Caco-2 (cell line): ENCODE measurements at regions of chr14 and their contacts with region 1.

Region 1: DNA sequence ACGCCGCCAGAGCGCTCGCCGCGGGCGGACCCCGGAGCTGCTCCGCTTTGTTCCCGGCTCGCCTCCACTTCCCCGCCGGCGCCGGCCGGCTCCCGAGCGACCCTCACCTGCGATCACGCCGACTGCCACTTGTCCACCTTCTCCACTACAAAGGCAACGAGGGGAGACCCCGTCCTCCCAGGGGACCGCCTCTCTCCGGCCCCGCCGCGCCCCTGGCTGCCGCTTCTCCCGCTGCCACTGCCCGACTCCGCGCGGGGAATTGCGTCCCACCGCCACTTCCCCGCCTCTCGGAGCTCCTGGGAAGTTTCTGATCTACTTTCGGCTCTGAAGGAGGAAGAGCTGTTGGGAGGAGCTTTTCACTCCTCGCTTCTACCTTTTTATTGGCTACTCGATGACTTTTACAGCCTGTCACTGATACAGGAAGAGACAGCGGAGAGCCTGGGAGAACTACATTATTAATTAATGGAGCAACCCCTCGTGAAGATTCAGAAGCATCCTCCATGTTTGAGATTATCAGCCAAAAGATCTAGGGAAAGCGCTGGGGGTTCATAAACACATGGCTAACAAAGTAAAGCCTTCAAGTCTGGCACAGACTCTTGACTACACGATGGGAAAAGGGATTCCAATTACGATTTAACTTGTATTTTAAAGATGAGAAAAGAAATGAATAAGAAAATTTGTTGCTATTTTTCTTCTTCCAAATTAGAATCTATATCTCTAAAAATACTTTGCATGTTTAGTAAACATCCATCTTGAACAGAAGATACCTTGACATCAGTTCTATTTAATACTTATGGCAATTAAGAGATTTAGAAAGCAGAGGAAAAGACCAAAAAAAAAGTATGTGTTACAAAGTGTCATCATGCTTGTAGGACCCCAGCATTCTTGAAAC is at the start of gene BAZ1A:
- DNase-seq: peak; percentile 82 to 83
- H3K4me3 ChIP-seq: peak within 1 kb of the TSS; percentile 72
- H3K4me3 Mint-ChIP-seq: peak within 1 kb of the TSS; percentile 99
- H3K27ac Mint-ChIP-seq: peak within 1 kb of the TSS; percentile 98
- H3K4me1 ChIP-seq: no peaks in the 10 kb centered on the region
- H3K4me1 Mint-ChIP-seq: no peaks in the 10 kb centered on the region
- H3K27me3 ChIP-seq: no peaks in the 10 kb centered on the region
- H3K27me3 Mint-ChIP-seq: no peaks in the 10 kb centered on the region
- CTCF ChIP-seq: no peak
- total RNA-seq, gene BAZ1A: 26.1 and 29.6 TPM in 2 replicates

Region 2: GRCh38 chr14:34678306-34678705 is 197.0 kb before region 1 on chr14:
- CTCF ChIA-PET with region 1: no interaction called
- POLR2A ChIA-PET with region 1: interaction called, 3 read pairs
- intact Hi-C with region 1: loop called (anchors 10 kb)
- DNase-seq: no peak
- H3K4me3 ChIP-seq: no peak overlapping the region
- H3K4me3 Mint-ChIP-seq: no peak overlapping the region
- H3K27ac Mint-ChIP-seq: no peak overlapping the region
- H3K4me1 ChIP-seq: no peaks in the 10 kb centered on the region
- H3K4me1 Mint-ChIP-seq: no peaks in the 10 kb centered on the region
- H3K27me3 ChIP-seq: no peaks in the 10 kb centered on the region
- H3K27me3 Mint-ChIP-seq: no peaks in the 10 kb centered on the region
- CTCF ChIP-seq: no peak

Region 3: GRCh38 chr14:34895277-34895676 is 20.0 kb after region 1 on chr14:
- CTCF ChIA-PET with region 1: no interaction called
- POLR2A ChIA-PET with region 1: no interaction called
- intact Hi-C with region 1: no loop called
- DNase-seq: no peak
- H3K4me3 ChIP-seq: no peak overlapping the region
- H3K4me3 Mint-ChIP-seq: no peak overlapping the region
- H3K27ac Mint-ChIP-seq: no peak overlapping the region
- H3K4me1 ChIP-seq: no peaks in the 10 kb centered on the region
- H3K4me1 Mint-ChIP-seq: no peaks in the 10 kb centered on the region
- H3K27me3 ChIP-seq: no peaks in the 10 kb centered on the region
- H3K27me3 Mint-ChIP-seq: no peaks in the 10 kb centered on the region
- CTCF ChIP-seq: no peak

Region 4: GRCh38 chr14:34956931-34957330 is 81.7 kb after region 1 on chr14:
- CTCF ChIA-PET with region 1: interaction called, 5 read pairs
- POLR2A ChIA-PET with region 1: interaction called, 5 read pairs
- intact Hi-C with region 1: loop called (anchors 5 kb)
- DNase-seq: no peak
- H3K4me3 ChIP-seq: no peak overlapping the region
- H3K4me3 Mint-ChIP-seq: no peak overlapping the region
- H3K27ac Mint-ChIP-seq: no peak overlapping the region
- H3K4me1 ChIP-seq: peaks cover 19% of the 10 kb centered on the region
- H3K4me1 Mint-ChIP-seq: peaks cover 16% of the 10 kb centered on the region
- H3K27me3 ChIP-seq: no peaks in the 10 kb centered on the region
- H3K27me3 Mint-ChIP-seq: no peaks in the 10 kb centered on the region
- CTCF ChIP-seq: no peak

Region 5: DNA sequence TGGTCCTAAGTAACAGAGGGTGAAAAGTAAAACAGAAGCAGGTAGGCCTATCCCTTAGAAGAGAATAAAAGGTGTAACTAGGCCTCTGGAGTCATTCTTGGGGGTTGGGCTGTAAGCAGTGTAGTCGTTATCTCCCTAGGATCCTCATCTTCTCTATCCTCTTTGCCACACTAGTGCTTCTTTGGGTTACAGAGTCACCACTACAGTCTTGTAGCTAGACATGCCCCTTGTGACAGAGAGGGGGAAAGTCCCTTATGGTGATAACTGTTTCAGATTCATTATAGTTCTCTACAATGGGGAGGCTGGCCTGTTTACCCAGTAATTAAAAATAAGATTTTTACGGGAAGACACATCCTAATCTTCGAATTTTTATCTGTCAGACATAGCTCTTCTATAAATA is 91.1 kb after region 1 on chr14:
- CTCF ChIA-PET with region 1: no interaction called
- POLR2A ChIA-PET with region 1: interaction called, 10 read pairs
- intact Hi-C with region 1: no loop called
- DNase-seq: no peak
- H3K4me3 ChIP-seq: no peak overlapping the region
- H3K4me3 Mint-ChIP-seq: no peak overlapping the region
- H3K27ac Mint-ChIP-seq: no peak overlapping the region
- H3K4me1 ChIP-seq: no peaks in the 10 kb centered on the region
- H3K4me1 Mint-ChIP-seq: no peaks in the 10 kb centered on the region
- H3K27me3 ChIP-seq: no peaks in the 10 kb centered on the region
- H3K27me3 Mint-ChIP-seq: no peaks in the 10 kb centered on the region
- CTCF ChIP-seq: no peak

Region 6: DNA sequence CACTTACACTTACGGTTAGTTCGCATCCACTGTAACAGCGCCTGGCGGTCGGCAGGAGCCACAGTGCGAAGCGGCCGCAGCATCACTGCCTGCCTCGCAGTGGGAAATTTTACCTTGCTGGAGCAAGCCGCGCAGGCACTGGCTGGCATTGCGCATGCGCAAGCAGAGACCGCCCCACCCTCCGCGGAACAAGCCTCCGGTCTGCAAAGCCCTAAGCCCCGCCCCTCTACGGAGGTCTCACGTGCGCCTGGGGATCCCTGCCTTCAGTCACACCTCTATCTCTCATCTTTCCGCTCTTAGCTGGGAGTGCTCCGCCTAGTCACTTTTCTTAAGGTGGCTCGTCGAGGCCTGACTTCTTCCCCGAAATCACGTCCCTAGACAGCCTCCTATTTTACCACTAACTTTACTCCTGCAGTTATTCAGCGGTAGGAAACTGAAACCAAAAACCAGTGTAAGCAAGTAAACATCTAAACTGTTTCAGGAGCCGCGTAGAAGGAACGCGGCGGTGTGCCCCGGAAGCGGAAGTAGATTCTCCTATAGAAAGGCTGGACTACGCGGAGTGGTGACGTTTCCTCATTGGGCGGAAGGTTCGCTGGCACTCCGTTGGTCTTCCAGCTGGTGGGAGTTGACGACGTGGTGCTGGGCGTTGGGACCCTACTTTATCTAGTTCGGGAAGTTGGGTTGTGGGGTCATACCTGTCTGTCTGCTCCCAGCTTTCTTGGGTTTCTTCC is 107.3 kb after region 1 on chr14 and contains the start of gene SRP54:
- CTCF ChIA-PET with region 1: interaction called, 4 read pairs
- POLR2A ChIA-PET with region 1: interaction called, 8 read pairs
- intact Hi-C with region 1: loop called (anchors 1 kb)
- DNase-seq: peak; percentile 99 to 100
- H3K4me3 ChIP-seq: peak within 1 kb of the TSS; percentile 58
- H3K4me3 Mint-ChIP-seq: no peak within 1 kb of the TSS
- H3K27ac Mint-ChIP-seq: no peak within 1 kb of the TSS
- H3K4me1 ChIP-seq: no peaks in the 10 kb centered on the region; the same call in 1 of the 2 replicates
- H3K4me1 Mint-ChIP-seq: no peaks in the 10 kb centered on the region
- H3K27me3 ChIP-seq: no peaks in the 10 kb centered on the region
- H3K27me3 Mint-ChIP-seq: no peaks in the 10 kb centered on the region
- CTCF ChIP-seq: no peak
- total RNA-seq, gene SRP54: 80.0 and 84.5 TPM in 2 replicates

Region 7: DNA sequence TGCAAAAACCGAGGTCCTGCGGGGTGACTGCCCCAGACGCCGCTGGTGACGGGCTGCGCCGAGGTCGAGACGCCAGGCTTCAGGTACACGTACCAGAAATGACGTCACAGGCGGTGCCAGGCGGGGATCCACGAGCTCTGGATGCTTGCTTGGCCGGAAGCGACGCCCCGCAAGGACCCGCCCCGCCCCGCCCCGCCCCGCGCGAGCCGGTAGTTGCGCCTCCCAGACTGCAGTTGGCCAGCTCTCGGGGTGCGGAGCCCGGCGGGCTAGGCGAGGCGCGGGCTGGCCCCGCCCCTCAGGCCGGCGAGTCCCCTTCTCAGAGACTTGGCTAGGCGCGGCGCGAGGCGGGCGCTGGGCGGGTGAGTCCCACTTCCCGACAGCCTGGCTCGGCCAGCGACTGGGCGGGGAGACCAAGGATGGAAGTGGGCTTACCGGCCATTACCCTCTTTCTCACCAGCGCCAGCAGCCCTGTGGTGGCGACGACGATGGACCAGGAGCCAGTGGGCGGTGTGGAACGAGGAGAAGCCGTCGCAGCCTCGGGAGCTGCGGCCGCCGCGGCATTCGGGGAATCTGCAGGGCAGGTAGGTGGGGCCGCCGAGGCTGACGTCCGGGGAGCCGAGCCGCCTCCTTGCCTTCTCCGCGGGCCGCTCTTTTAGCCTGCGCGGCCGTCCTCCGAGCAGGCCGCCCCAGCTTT is 170.9 kb after region 1 on chr14 and contains the start of gene FAM177A1:
- CTCF ChIA-PET with region 1: interaction called, 6 read pairs
- POLR2A ChIA-PET with region 1: interaction called, 3 read pairs
- intact Hi-C with region 1: loop called (anchors 10 kb)
- DNase-seq: peak; percentile 97 to 99
- H3K4me3 ChIP-seq: peak within 1 kb of the TSS; percentile 93
- H3K4me3 Mint-ChIP-seq: peak within 1 kb of the TSS; percentile 90
- H3K27ac Mint-ChIP-seq: peak within 1 kb of the TSS; percentile 98
- H3K4me1 ChIP-seq: peaks cover 21% of the 10 kb centered on the region
- H3K4me1 Mint-ChIP-seq: peaks cover 17% of the 10 kb centered on the region
- H3K27me3 ChIP-seq: no peaks in the 10 kb centered on the region
- H3K27me3 Mint-ChIP-seq: no peaks in the 10 kb centered on the region
- CTCF ChIP-seq: no peak
- total RNA-seq, gene FAM177A1: 73.6 and 82.0 TPM in 2 replicates